ENCODE measurements at regions of chr5 and their contacts with region 1.

Region 1: DNA sequence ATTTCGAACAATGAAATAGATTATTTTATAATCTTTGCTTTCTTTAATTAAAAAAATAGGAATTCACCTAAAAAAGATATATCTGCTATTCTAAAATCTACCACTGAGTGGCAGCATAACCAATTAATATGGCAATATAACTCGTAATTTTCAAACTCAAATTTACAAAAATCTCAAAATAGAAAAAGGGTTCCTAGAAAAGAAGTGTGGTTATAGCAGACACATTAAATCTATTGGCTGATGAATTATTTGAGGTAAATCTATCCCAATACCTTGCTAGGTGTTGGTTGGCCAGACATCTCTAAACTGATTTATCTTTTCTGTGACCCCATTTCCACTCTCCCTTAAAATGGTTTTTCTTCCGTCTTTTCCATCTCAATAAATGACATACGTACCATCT is 30.2 kb upstream of the NRG2 start:
- DNase-seq: peak in 3 of 14 experiments; percentile 49 to 67 (median 64)
- ATAC-seq: no peak
- H3K4me3 ChIP-seq: no peak overlapping the region
- H3K4me3 Mint-ChIP-seq: no peak overlapping the region
- H3K27ac ChIP-seq: no peak overlapping the region
- H3K27ac Mint-ChIP-seq: no peak overlapping the region
- H3K4me1 ChIP-seq: no peaks in the 10 kb centered on the region
- H3K4me1 Mint-ChIP-seq: no peaks in the 10 kb centered on the region
- H3K27me3 ChIP-seq: peaks cover 7 to 10% of the 10 kb centered on the region in 2 experiments
- H3K27me3 Mint-ChIP-seq: peaks cover 36% of the 10 kb centered on the region
- CTCF ChIP-seq: peak; percentile 83

Region 2: GRCh38 chr5:140042643-140043500 is 30.4 kb before region 1 on chr5 and contains the start of gene NRG2:
- CTCF ChIA-PET with region 1: no interaction called
- POLR2A ChIA-PET with region 1: no interaction called
- intact Hi-C with region 1: no loop called
- DNase-seq: peak; percentile 23 to 73 (median 44)
- ATAC-seq: peak; percentile 96
- H3K4me3 ChIP-seq: peak within 1 kb of the TSS; percentile 54
- H3K4me3 Mint-ChIP-seq: peak within 1 kb of the TSS; percentile 70
- H3K27ac ChIP-seq: no peak within 1 kb of the TSS
- H3K27ac Mint-ChIP-seq: no peak within 1 kb of the TSS
- H3K4me1 ChIP-seq: peaks cover 22% of the 10 kb centered on the region
- H3K4me1 Mint-ChIP-seq: peaks cover 18% of the 10 kb centered on the region
- H3K27me3 ChIP-seq: peaks cover 39 to 72% of the 10 kb centered on the region in 2 experiments
- H3K27me3 Mint-ChIP-seq: peaks cover 78% of the 10 kb centered on the region
- CTCF ChIP-seq: peak; percentile 35
- total RNA-seq, gene NRG2: 0.08 to 0.17 TPM

Region 3: DNA sequence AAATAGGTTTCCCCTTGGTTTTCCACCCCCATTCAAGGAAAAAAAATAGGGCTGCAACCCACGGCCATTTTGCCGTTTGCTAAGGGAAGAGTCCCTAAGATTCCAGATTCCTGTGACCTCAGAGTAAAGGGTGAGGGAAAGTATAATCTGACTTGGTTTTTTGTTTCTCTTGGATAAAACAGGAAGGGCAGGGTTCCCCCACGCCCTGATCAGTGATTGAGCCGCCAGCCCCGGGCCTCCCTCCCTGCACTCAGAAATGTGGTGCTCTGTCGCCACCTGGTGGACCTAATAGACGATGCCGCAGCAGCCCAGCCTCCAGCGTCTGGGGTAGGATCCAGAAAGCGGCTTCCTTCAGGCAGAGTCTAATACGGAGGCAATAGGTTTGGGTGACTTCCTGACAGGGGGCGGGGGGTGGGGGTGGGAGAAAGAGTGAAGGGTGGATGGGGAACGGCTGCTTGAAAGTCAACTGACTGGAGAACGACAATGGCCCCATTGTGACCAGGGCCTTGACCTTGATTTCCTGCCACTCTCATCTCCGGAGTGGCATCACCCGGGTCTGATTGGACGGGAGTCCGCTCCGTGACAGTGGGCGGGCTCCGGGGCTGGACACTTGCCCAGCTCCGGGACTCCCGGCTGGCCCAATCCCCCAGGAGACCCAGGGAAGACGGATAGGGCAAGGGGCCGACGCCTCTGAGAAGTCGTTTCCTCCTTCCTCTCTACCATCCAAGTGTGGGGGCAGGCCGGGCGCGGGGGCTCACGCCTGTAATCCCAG is 83.9 kb after region 1 on chr5:
- CTCF ChIA-PET with region 1: interaction called, 7 read pairs
- POLR2A ChIA-PET with region 1: no interaction called
- intact Hi-C with region 1: loop called (anchors 1 kb)
- DNase-seq: peak; percentile 79 to 93 (median 84)
- ATAC-seq: peak; percentile 100
- H3K4me3 ChIP-seq: no peak overlapping the region
- H3K4me3 Mint-ChIP-seq: peak overlapping the region; percentile 50
- H3K27ac ChIP-seq: no peak overlapping the region
- H3K27ac Mint-ChIP-seq: peak overlapping the region; percentile 21
- H3K4me1 ChIP-seq: peaks cover 10% of the 10 kb centered on the region
- H3K4me1 Mint-ChIP-seq: peaks cover 15% of the 10 kb centered on the region
- H3K27me3 ChIP-seq: no peaks in the 10 kb centered on the region
- H3K27me3 Mint-ChIP-seq: no peaks in the 10 kb centered on the region
- CTCF ChIP-seq: peak; percentile 86

Measured in CD4-positive, alpha-beta T cell (primary cell).